ENCODE measurements at regions of chr1 and their contacts with region 1.

Region 1: DNA sequence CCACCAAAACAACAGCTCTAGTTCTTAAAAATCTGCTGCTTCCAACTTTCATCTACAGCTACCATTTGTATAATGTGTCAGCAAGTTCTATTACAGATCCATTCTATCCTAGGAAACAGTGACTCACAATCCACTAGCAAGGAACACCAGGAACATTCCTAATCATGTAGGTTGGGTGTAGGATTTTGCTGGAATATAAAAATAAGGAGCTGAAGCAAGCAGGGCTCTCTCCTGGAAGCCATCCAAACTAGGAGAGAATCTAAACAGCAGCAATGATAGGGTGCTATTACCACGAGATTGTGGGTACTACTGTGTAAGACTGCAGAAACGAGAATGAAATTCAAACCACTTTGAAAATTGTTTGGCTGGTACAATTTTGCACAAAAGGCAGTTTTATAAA is 135.0 kb downstream of the PTPN14 start:
- DNase-seq: no peak
- ATAC-seq: no peak
- H3K4me3 ChIP-seq: no peak overlapping the region
- H3K27ac ChIP-seq: no peak overlapping the region
- H3K4me1 ChIP-seq: no peaks in the 10 kb centered on the region
- H3K27me3 ChIP-seq: no peaks in the 10 kb centered on the region
- CTCF ChIP-seq: no peak
- EP300 ChIP-seq: no peak
- POLR2A ChIP-seq: no peak
- RAD21 ChIP-seq: no peak

Region 2: GRCh38 chr1:214427871-214428277 is 11.5 kb after region 1 on chr1:
- CTCF ChIA-PET with region 1: interaction called, 5 read pairs
- POLR2A ChIA-PET with region 1: interaction called, 5 read pairs
- RAD21 ChIA-PET with region 1: interaction called, 10 read pairs
- SMC1A ChIA-PET with region 1: interaction called, 19 read pairs
- in situ Hi-C with region 1: no loop called
- intact Hi-C with region 1: no loop called
- DNase-seq: peak; percentile 80
- ATAC-seq: peak; percentile 97
- H3K4me3 ChIP-seq: no peak overlapping the region
- H3K27ac ChIP-seq: peak overlapping the region; percentile 57
- H3K4me1 ChIP-seq: peaks cover 7% of the 10 kb centered on the region
- H3K27me3 ChIP-seq: no peaks in the 10 kb centered on the region
- CTCF ChIP-seq: no peak
- EP300 ChIP-seq: peak; percentile 56 to 75; a peak in 3 of 4 replicates
- POLR2A ChIP-seq: no peak; the same call in 1 of the 2 replicates
- RAD21 ChIP-seq: no peak

Measured in GM12878 (cell line).